Activated CD8-positive, alpha-beta T cell treated with anti-CD3 and anti-CD28 coated beads for 36 hours (primary cell): ENCODE measurements at regions of chr7 and their contacts with region 1.

Region 1: GRCh38 chr7:44797329-44798251 is 1.1 kb downstream of the PPIA start:
- DNase-seq: peak; percentile 91
- ATAC-seq: peak; percentile 63
- H3K4me3 Mint-ChIP-seq: peak overlapping the region; percentile 92
- H3K27ac Mint-ChIP-seq: peak overlapping the region; percentile 99
- H3K4me1 Mint-ChIP-seq: peaks cover 29% of the 10 kb centered on the region
- H3K27me3 Mint-ChIP-seq: no peaks in the 10 kb centered on the region
- CTCF ChIP-seq: peak; percentile 30

Region 2: DNA sequence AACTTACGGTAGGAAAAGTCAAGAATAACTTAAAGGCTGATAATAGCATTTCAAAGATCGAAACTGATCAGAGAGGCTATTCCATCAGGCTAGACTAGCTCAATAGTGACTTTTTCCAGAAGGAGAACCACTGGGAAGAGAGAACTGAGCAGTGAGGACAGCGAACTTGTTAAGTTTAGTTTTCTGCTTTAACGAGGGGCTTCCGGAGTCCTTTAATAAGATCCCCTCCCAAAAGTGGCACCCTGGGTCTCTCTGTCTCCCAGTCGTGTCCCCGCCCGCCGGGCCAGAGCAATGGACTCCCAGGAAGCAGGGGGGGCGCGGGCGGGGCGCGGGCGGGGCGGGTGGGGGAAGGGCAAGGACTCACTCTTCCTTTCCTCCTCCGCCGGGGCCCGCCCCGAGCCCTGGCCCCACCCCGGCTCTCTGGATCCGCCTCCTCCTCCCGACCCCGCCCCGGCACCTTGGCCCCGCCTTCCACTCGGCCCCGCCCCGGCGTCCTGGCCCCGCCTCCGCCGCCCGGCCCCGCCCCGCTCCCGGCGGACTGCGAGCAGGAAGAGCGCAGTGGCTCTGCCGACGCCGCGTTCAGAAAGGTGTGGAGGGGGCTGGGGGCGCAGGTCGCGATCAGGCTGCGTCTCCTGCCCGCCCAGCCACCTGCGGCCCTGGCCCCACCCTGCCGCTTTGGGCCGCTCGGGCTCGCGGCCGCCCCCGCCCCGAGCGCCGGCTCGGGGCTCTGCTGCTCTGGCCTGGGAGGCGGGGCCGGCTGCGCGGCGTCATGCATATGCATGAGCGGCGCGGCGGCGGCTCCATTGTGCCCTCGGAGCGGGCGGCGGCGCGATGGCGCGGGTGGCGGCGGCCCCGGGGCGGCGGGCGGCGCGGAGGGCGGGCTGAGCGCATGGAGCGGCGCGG is 49.3 kb before region 1 on chr7 and contains the start of gene ZMIZ2:
- CTCF ChIA-PET with region 1: interaction called, 4 read pairs
- POLR2A ChIA-PET with region 1: interaction called, 18 read pairs
- intact Hi-C with region 1: no loop called
- DNase-seq: peak; percentile 92
- ATAC-seq: peak; percentile 93
- H3K4me3 Mint-ChIP-seq: peak within 1 kb of the TSS; percentile 83
- H3K27ac Mint-ChIP-seq: peak within 1 kb of the TSS; percentile 81
- H3K4me1 Mint-ChIP-seq: peaks cover 33% of the 10 kb centered on the region
- H3K27me3 Mint-ChIP-seq: no peaks in the 10 kb centered on the region
- CTCF ChIP-seq: no peak
- total RNA-seq, gene ZMIZ2: 131 to 134 TPM

Region 3: DNA sequence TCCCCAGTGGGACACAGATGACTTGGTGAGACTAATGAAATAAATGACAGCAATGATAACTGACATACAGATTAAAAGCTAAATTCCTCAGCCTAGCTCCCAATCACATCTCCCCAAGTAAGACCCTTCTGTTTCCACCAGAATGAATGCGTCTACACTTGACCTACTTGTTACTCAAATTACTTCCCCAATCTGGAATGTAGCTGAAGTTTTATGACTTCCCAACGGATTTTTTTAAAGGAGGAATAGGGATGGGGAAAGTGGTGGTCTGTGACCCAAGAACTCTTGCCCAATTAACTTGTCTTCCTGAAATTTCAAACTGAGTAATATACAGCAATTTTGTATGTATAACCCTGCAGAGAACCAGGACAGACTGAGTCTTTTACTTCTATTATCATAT is 41.2 kb after region 1 on chr7:
- CTCF ChIA-PET with region 1: interaction called, 3 read pairs
- POLR2A ChIA-PET with region 1: interaction called, 13 read pairs
- intact Hi-C with region 1: no loop called
- DNase-seq: no peak
- ATAC-seq: no peak
- H3K4me3 Mint-ChIP-seq: no peak overlapping the region
- H3K27ac Mint-ChIP-seq: peak overlapping the region; percentile 25
- H3K4me1 Mint-ChIP-seq: peaks cover 26% of the 10 kb centered on the region
- H3K27me3 Mint-ChIP-seq: no peaks in the 10 kb centered on the region
- CTCF ChIP-seq: no peak

Region 4: DNA sequence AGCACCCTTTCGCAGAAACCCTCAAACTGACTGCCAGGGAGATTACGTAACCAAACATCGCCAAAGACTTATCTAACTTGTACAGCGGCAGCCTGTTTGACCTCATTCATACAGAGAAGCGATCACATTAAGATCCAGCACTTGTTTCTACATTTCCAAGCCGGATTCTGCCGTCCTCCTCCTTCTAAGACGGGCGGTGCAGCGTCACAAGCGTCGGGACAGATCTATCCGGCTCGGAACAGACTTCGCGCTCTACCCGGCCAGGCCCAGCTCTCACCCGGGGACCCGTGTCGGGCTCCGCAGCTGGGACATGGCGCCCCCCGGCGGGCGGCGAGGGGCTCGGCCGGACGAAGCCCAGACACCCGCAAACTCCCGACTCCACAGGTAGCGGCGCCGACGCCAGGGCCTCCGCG is 49.9 kb after region 1 on chr7:
- CTCF ChIA-PET with region 1: interaction called, 13 read pairs
- POLR2A ChIA-PET with region 1: interaction called, 28 read pairs
- intact Hi-C with region 1: loop called (anchors 2 kb)
- DNase-seq: peak; percentile 88
- ATAC-seq: peak; percentile 69
- H3K4me3 Mint-ChIP-seq: peak overlapping the region; percentile 92
- H3K27ac Mint-ChIP-seq: peak overlapping the region; percentile 100
- H3K4me1 Mint-ChIP-seq: peaks cover 36% of the 10 kb centered on the region
- H3K27me3 Mint-ChIP-seq: no peaks in the 10 kb centered on the region
- CTCF ChIP-seq: peak; percentile 85

Region 5: DNA sequence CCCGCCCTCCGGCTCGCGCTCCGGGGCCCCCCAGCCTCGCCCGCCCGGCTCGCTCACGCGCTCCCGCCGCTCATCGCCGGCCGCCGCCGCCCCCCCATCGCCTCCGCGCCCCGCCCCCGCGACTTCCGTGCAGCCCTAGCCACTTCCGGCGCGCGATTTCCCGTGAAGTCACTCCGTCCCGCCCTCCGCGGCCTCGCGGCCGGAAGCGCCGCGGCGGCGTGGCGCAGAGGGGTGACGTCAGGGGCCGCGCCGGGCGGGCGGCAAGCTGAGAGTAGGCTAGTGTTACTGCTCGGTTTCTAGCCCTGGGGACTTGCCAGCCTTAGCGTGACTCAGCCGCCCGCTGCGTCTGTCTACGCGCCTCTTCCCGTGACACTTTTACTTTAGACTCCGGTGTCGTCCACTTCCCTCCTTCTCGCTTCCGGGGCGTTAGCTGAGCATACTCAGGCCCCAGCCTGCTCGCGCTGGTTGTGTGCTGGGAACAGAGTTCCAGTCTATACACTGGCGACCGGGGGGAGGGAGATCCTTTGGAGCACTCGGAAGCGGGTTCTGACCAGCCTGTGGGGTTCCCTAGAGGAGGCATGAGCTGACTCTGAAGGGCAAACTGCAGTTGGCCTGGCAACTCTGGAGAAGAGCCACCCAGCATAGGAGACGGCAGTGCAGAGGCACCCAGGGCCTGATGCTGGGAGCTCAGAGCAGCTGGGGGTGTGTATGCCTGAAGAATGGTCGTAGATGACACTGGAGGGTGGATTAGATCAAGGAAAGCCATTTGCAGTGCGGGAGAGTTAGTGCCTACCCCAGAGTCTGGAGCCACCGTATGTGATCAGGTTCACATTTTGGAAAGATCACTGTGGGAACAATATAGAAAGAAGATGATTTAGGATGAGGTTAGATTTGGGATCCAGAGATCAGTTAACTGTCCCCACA is 88.1 kb after region 1 on chr7 and contains the start of gene PURB:
- CTCF ChIA-PET with region 1: no interaction called
- POLR2A ChIA-PET with region 1: interaction called, 14 read pairs
- intact Hi-C with region 1: no loop called
- DNase-seq: peak; percentile 97
- ATAC-seq: peak; percentile 94
- H3K4me3 Mint-ChIP-seq: peak within 1 kb of the TSS; percentile 96
- H3K27ac Mint-ChIP-seq: peak within 1 kb of the TSS; percentile 98
- H3K4me1 Mint-ChIP-seq: peaks cover 51% of the 10 kb centered on the region
- H3K27me3 Mint-ChIP-seq: no peaks in the 10 kb centered on the region
- CTCF ChIP-seq: no peak
- total RNA-seq, gene PURB: 20.5 to 21.0 TPM

Region 6: DNA sequence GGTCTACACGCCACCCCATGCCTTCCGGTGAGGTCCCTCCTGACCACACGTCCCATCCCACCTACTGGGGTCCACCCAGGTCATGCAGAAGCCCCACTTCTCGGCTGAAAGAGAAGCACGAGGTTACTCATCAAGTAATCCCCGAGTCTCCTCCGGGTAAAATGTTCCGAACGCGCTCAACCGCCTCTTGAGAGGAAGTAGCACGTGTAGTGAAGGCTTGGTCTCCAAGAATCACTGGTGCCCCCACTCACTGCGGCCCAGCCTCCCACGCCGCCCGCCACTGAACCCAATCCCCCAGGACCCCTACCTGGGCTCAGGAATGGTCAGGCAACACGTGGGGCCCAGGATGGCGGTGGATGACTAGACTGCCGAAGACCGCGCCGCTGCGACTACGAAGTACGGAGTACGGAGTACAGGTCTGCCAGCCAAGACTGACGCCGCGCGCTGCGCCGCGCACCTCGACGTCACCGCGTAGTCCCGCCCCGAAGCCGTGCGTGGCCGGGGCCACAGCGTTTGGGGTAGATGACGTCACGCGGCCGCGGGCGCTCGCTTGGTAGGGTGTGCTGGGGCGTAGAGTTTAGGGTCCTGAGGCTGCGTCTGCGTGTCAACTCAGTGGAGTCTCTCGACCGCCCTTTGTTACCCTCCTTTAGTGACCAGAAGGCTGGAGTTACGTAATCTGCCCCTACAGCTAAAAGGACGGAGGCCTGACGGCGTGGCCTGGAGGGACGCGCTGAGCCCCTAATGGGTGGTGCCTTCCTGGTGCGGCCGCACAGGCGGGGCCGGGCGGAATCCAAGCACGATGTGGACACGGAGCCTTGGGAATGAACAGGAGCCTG is 188.8 kb after region 1 on chr7:
- CTCF ChIA-PET with region 1: no interaction called
- POLR2A ChIA-PET with region 1: interaction called, 11 read pairs
- intact Hi-C with region 1: no loop called
- DNase-seq: peak; percentile 97
- ATAC-seq: peak; percentile 91
- H3K4me3 Mint-ChIP-seq: peak overlapping the region; percentile 100
- H3K27ac Mint-ChIP-seq: peak overlapping the region; percentile 100
- H3K4me1 Mint-ChIP-seq: peaks cover 48% of the 10 kb centered on the region
- H3K27me3 Mint-ChIP-seq: no peaks in the 10 kb centered on the region
- CTCF ChIP-seq: no peak